ENCODE measurements at regions of chr1 and their contacts with region 1.

Region 1: DNA sequence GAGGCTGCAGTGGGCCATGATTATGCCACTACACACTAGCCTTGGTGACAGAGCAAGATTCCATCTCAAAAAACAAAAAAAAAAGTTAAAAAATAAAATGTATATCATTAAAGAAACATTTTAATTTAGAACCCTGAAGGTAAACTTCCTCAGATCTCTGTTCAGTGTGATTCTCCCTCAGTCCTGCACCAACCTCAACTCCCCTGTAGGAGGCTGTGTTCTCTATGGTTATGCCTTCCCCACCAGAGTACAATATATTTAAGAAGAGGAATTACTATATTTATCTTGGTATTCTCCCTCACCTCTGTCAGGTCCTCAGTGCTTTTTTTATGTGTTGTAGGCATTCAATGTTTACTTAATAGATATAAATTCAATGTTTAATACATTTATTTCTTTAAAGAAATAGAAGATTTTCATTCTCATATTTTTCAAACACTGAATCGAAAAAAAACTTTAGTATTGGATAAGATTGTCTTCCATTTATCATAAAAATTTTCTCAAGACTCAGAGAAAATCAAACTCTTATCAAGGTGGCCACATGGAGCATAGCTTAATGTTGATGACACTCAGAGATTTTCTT is 4.8 kb upstream of the LRRC8B start:
- DNase-seq: peak in 6 of 7 donors; percentile 33 to 69 (median 44)
- H3K4me3 ChIP-seq: no peak overlapping the region
- H3K27ac ChIP-seq: no peak overlapping the region
- H3K4me1 ChIP-seq: peaks cover 0 to 11% of the 10 kb centered on the region in 2 donors
- H3K27me3 ChIP-seq: no peaks in the 10 kb centered on the region
- CTCF ChIP-seq: peak; percentile 43 to 80 (median 70)
- POLR2A ChIP-seq: no peak

Region 2: GRCh38 chr1:89566761-89567174 is 46.9 kb after region 1 on chr1:
- intact Hi-C with region 1: no loop called
- DNase-seq: peak; percentile 62 to 92 (median 77)
- H3K4me3 ChIP-seq: peak overlapping the region in 1 of 4 donors; percentile 7
- H3K27ac ChIP-seq: peak overlapping the region; percentile 80 to 97 (median 86)
- H3K4me1 ChIP-seq: peaks cover 13 to 47% of the 10 kb centered on the region in 2 donors
- H3K27me3 ChIP-seq: no peaks in the 10 kb centered on the region
- CTCF ChIP-seq: no peak
- POLR2A ChIP-seq: peak in 1 of 2 donors; percentile 71

Region 3: GRCh38 chr1:89598450-89599331 is 78.8 kb after region 1 on chr1:
- intact Hi-C with region 1: loop called (anchors 2 to 10 kb)
- DNase-seq: no peak
- H3K4me3 ChIP-seq: no peak overlapping the region
- H3K27ac ChIP-seq: no peak overlapping the region
- H3K4me1 ChIP-seq: peaks cover 3 to 15% of the 10 kb centered on the region in 2 donors
- H3K27me3 ChIP-seq: no peaks in the 10 kb centered on the region
- CTCF ChIP-seq: peak; percentile 49 to 83 (median 69)
- POLR2A ChIP-seq: no peak

Region 4: DNA sequence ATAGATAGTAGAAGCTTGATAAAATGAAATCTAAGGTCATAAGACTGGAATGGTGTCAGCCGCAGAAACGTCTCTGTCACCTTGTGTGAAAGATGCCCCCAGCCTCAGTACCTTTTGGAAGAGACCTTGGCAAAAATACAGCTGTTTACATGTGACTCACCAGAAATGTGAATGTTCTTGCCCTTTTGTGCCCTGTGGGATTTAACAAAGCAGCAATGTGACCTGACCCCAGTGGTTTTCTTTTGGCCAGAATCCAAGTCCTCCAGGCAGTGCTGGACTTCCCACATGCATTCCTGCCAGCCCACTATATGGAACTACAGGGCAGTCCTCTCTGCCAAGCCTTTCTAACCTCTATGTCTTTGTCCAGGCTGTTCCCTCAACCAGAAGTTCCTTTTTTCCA is 85.8 kb after region 1 on chr1:
- intact Hi-C with region 1: loop called (anchors 2 to 10 kb)
- DNase-seq: peak in 2 of 7 donors; percentile 35 to 45
- H3K4me3 ChIP-seq: no peak overlapping the region
- H3K27ac ChIP-seq: no peak overlapping the region
- H3K4me1 ChIP-seq: peaks cover 10 to 46% of the 10 kb centered on the region in 2 donors
- H3K27me3 ChIP-seq: no peaks in the 10 kb centered on the region
- CTCF ChIP-seq: no peak
- POLR2A ChIP-seq: no peak

Region 5: GRCh38 chr1:89632657-89633247 is 112.9 kb after region 1 on chr1 and contains the start of gene LRRC8C:
- intact Hi-C with region 1: no loop called
- DNase-seq: peak; percentile 81 to 90 (median 85)
- H3K4me3 ChIP-seq: peak within 1 kb of the TSS; percentile 64 to 98 (median 88)
- H3K27ac ChIP-seq: peak within 1 kb of the TSS; percentile 72 to 99 (median 90)
- H3K4me1 ChIP-seq: peaks cover 20 to 41% of the 10 kb centered on the region in 2 donors
- H3K27me3 ChIP-seq: no peaks in the 10 kb centered on the region
- CTCF ChIP-seq: peak in 4 of 6 experiments; percentile 27 to 90 (median 72)
- POLR2A ChIP-seq: peak in 1 of 2 donors; percentile 65
- total RNA-seq, gene LRRC8C: 6.5 to 33.6 (median 12.1) TPM